ENCODE measurements at regions of chr6 and their contacts with region 1.

Region 1: DNA sequence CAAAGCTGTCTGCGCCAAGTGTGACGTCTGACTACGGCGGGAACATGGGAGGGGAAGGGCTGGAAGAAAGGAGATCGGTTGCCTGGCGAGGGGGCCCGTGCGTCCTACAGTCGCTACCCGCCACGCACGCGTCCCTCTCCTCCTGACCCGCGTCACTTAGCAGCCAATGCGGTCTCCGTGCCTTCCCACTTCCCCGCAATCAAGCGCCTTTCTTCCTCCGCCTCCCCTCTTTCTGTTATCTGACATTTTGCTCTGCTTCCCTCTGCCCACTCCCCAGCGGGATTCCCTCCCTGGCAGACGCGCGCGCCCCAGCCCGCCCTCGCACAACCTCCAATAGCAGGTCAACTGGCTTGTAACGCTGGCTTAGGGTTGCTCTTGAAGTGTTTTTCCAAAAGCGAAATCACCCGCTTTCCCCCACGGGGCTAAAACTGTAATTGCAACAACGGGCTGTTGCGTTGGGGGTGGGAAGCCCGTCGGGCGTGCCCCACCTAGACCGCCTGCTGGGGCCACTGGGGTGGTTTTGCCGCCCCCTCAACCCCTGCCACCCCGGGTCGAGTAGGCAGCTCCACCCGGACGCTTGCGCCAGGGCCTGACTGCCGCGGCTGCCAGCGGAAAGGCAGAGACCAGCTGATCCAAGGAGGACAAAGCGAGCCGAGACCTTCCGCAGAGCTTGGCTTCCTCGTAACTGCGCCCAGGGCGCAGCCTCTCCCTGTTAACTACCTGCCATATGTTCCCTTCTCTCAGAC is 6.2 kb upstream of the SOX4 start:
- DNase-seq: peak; percentile 69
- ATAC-seq: peak; percentile 36
- H3K4me3 ChIP-seq: peak overlapping the region; percentile 92
- H3K27ac ChIP-seq: peak overlapping the region; percentile 85
- H3K4me1 ChIP-seq: peaks cover 23% of the 10 kb centered on the region
- H3K27me3 ChIP-seq: no peaks in the 10 kb centered on the region
- CTCF ChIP-seq: no peak

Region 2: DNA sequence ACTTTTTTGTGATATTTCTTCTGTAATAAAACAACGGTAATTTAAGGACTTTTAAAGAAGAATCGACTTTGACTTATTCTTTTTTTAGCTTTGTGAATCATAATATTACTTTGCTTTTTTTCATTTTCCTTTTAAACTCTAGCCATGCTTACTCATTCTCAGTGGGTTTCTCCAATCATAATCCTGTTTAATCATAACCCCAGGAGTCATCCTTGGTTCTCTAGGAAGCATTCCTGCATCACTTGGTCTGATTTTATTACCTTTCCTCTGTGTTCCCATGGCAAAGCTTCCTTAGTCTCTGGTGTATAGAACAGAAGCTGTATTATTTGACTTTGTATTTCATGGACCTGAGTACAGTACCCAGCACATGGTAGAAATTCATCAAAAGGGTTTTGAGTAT is 829.6 kb before region 1 on chr6:
- CTCF ChIA-PET with region 1: interaction called, 10 read pairs
- POLR2A ChIA-PET with region 1: no interaction called
- intact Hi-C with region 1: no loop called
- DNase-seq: peak; percentile 61
- ATAC-seq: peak; percentile 71
- H3K4me3 ChIP-seq: no peak overlapping the region
- H3K27ac ChIP-seq: peak overlapping the region; percentile 26; the same call in 1 of the 2 replicates
- H3K4me1 ChIP-seq: peaks cover 24% of the 10 kb centered on the region
- H3K27me3 ChIP-seq: no peaks in the 10 kb centered on the region
- CTCF ChIP-seq: no peak

Region 3: DNA sequence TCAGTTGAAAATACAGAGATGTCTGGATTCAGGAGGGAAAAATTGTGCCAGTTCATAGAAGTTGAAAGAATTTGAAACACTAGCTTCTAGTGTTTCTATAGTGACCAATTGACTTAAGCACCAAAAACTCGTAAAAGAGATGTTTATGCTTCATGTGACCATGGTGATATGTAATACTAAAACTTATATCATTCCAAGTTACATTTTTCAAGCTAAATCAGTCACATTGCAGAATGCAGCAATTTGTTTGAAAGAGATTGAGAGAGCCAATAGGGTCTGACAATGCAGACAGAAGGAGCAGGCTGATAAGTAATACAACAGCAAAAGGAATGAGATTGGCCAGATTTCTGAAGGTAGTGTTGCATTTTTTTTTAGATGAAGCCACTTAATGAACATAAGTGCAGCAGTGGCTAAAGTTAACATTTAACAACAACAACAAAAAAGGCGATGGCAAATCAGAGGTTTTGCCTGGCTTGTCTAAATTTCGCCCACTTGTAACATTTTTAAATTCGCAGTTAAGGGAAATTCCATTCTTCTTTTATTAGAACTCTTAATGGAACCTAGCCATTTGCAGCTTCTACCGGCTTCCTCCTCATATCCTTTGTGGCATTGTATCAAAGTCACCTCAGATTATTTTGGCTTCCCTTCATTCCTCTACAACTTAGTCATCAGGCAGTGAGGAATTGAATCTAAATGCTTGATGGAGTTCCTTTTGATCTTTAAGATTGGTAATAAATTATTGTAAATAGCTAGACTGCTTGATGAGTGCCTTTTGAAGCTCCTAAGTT is 477.8 kb before region 1 on chr6:
- CTCF ChIA-PET with region 1: no interaction called
- POLR2A ChIA-PET with region 1: interaction called, 3 read pairs
- intact Hi-C with region 1: loop called (anchors 1 kb)
- DNase-seq: peak; percentile 94
- ATAC-seq: peak; percentile 77
- H3K4me3 ChIP-seq: peak overlapping the region; percentile 46
- H3K27ac ChIP-seq: peak overlapping the region; percentile 96
- H3K4me1 ChIP-seq: peaks cover 45% of the 10 kb centered on the region
- H3K27me3 ChIP-seq: no peaks in the 10 kb centered on the region
- CTCF ChIP-seq: no peak

Region 4: DNA sequence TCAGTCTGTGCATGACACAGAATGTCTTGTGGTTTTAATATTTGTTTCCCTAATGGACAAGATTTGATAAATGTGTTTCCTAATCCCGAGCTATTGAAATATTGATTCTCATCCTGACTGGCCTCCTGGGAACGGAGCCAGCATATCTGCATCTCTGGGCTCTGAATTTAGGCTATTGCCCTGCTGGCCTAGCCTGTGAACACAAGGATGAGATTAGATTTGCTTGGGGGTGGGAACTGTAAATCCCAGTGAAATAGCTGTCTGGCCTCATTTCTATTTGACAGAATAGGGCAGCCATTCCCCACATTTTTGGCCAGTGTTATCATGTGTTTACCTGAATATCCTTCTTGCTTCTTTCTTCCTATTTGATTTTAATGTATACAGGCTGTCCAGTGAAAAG is 192.2 kb before region 1 on chr6:
- CTCF ChIA-PET with region 1: interaction called, 12 read pairs
- POLR2A ChIA-PET with region 1: no interaction called
- intact Hi-C with region 1: no loop called
- DNase-seq: peak; percentile 54
- ATAC-seq: peak; percentile 37
- H3K4me3 ChIP-seq: no peak overlapping the region
- H3K27ac ChIP-seq: no peak overlapping the region
- H3K4me1 ChIP-seq: peaks cover 25% of the 10 kb centered on the region
- H3K27me3 ChIP-seq: no peaks in the 10 kb centered on the region
- CTCF ChIP-seq: no peak

Region 5: DNA sequence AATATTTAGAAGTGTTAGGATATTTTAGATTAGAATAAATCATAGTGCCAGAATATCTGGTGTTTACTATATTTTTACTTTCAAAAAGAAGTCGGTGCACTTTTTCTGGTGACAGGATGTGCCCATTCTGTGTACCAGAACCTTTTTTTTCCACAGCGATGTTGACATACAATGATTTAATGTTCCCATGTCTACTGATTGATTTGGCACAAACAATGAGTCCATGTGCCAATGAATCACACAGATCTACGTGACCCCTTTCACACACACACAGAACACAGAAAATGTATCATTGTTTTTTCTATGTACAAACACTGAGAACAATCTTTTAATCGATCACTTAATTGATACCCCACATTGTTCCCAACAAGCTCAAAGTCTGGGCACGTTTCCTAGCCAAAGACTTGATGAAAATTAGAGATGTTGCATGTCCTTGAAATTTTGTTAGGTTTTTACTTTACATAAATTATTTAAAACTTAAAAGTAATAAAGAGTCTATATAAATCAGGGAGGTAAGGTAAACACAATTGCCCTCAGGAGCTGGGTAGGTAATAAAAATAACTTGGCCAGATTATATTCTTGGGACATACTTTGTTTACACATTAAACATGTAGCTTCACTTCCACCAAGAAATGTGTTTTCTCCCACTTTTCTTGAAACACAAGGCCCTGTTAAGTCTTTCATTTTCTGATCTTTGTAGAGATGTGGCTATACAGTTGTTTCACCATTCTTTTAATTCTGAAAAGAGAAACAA is 30.2 kb before region 1 on chr6:
- CTCF ChIA-PET with region 1: no interaction called
- POLR2A ChIA-PET with region 1: no interaction called
- intact Hi-C with region 1: loop called (anchors 1 kb)
- DNase-seq: peak; percentile 76
- ATAC-seq: peak; percentile 83
- H3K4me3 ChIP-seq: no peak overlapping the region
- H3K27ac ChIP-seq: peak overlapping the region; percentile 56
- H3K4me1 ChIP-seq: peaks cover 18% of the 10 kb centered on the region
- H3K27me3 ChIP-seq: no peaks in the 10 kb centered on the region
- CTCF ChIP-seq: no peak

Region 6: DNA sequence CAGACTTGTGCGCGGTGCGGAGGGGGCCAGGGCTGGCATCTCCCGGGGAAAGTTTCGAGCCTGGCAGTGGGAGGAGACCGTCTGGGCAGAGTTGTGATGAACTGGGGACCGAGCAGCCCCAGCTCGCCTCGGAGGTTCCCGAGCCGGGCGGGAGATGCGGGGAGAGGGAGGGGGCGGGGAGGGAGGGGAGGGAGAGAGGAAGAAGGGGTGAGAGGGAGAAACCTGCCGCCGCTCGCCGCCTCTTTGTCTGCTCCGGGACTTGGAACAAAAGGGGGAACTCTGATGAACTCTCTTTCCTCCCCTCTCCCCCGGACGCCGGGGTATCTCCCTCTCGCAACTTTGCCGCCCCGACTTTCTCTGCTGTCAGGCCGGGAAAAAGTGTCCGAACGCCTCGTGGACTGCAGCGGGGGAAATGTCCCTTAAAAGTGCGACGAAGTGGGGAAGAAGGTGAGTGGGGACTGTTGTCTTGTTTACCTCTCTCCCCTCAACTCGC is 78.9 kb after region 1 on chr6:
- CTCF ChIA-PET with region 1: no interaction called
- POLR2A ChIA-PET with region 1: no interaction called
- intact Hi-C with region 1: no loop called
- DNase-seq: no peak
- ATAC-seq: no peak
- H3K4me3 ChIP-seq: peak overlapping the region; percentile 57
- H3K27ac ChIP-seq: no peak overlapping the region
- H3K4me1 ChIP-seq: no peaks in the 10 kb centered on the region
- H3K27me3 ChIP-seq: no peaks in the 10 kb centered on the region
- CTCF ChIP-seq: no peak

Region 7: DNA sequence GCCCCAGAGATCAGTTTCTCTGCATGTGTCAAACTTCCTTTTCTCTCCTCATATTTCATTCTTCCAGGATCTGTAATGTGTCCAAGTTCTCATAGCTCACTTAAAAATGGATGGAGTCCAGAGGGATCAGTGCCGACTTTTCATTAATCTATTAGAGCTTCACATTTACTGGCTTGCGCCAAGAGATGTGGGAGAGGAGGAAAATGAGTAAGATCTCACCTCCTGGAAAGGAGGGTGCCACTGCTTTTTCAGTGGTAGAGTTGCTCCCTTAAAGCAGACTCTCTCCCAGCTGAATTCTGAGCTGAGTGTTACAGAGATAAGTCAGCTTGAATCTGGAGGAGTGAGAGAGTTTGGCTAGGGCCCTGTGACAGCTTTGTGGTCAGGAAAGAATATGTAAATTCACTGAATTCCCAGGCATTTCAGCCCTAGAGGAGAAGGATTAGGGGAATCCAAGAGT is 182.1 kb after region 1 on chr6:
- CTCF ChIA-PET with region 1: no interaction called
- POLR2A ChIA-PET with region 1: no interaction called
- intact Hi-C with region 1: no loop called
- DNase-seq: peak; percentile 30
- ATAC-seq: peak; percentile 67
- H3K4me3 ChIP-seq: no peak overlapping the region
- H3K27ac ChIP-seq: peak overlapping the region; percentile 17
- H3K4me1 ChIP-seq: peaks cover 37% of the 10 kb centered on the region
- H3K27me3 ChIP-seq: no peaks in the 10 kb centered on the region
- CTCF ChIP-seq: no peak

Region 8: DNA sequence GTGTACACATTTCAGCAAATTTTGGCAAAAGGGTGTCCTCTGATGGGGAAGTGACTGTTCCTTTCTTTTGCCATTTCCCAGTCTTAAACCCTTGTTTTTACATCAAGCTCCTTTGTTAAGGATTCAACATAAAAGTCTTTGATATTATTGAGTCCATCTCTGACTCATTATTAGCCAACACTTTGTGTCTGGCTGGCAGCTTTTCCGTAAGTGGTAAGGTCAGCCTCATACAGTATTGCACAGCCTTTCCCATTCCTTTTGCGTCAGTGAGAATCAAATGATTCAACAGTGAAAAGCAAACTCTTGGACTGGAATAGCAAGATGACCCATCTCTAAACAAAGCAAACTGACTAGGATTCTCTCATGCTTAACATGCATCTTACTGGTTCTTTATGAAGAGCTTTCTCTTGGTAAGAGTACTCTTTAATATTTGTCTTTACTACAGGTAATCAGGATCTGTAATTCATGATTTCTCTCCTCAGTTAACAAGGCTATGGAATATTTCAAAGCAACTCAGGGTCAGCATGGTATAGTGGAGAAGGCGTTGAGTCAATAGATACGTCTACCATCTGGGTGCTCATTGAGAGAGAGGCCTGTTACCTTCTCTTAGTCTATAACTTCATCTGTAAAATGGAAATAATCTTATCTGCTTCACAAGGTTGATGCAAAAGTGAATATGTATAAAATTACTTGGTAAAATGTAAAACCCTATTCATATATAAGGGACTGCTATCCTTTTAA is 525.8 kb after region 1 on chr6:
- CTCF ChIA-PET with region 1: no interaction called
- POLR2A ChIA-PET with region 1: interaction called, 23 read pairs
- intact Hi-C with region 1: no loop called
- DNase-seq: peak; percentile 98
- ATAC-seq: peak; percentile 98
- H3K4me3 ChIP-seq: no peak overlapping the region
- H3K27ac ChIP-seq: peak overlapping the region; percentile 99
- H3K4me1 ChIP-seq: peaks cover 20% of the 10 kb centered on the region
- H3K27me3 ChIP-seq: no peaks in the 10 kb centered on the region
- CTCF ChIP-seq: no peak